ENCODE measurements at regions of chr13 and their contacts with region 1.

Region 1: DNA sequence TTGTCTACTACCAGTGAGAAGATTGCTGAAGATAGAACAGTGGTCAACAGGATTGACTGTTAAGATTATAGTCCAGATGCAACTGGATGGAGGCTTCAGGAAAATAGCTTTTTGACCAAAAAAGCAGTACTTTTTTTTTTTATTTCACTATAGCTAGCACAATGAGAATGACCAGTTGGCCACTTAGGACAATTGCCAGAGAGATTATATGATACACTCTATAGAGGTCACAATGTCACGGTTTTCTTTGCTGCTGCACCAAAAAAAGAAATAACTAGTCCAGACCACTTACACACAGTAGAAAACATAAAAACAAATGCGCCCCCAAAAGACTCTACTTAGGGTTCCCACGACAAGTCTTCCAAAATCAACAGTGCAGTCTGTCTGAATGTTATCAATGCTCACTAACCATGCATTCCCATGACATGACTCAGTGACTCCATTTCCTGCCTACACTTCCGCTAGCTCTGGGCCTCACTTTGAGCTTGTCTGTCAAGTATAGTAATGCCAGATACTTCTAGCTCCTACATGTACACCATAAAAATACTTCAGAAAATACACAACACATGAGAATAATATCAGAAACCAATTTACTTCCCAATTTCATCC is 209.1 kb upstream of the STARD13 start:
- DNase-seq: no peak
- H3K4me3 ChIP-seq: no peak overlapping the region
- H3K27ac ChIP-seq: peak overlapping the region; percentile 56 to 82
- H3K4me1 ChIP-seq: peaks cover 0 to 35% of the 10 kb centered on the region in 2 donors
- H3K27me3 ChIP-seq: no peaks in the 10 kb centered on the region
- CTCF ChIP-seq: no peak

Region 2: DNA sequence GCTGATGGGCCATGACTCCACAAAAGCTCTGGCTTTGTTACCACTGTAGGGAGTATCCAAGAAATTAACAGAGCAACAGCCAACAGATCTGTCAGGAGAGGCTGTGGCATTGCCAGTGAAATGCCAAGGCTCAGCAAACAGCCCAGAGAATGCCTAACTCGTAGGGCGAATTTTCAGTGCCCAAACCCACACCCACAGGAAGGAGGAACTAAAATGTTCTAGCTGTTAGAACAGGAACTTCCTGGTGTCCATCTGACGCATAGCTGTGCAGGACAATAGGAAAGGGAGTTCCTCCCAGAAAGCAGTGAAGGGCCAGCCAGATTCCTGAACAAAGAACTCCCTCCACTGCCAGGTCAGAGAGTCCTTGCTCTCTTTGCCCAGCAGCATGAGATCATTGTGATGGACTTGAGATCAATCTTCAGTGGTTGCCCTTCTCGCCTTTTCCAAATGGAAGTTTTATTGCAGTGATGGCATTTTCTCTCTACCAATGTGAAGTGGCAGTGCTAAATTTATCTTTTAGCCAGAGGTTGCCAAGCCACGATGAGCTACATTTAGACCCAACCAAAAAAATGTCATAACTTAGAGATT is 15.0 kb after region 1 on chr13:
- intact Hi-C with region 1: loop called (anchors 2 kb)
- DNase-seq: peak; percentile 21 to 86
- H3K4me3 ChIP-seq: peak overlapping the region; percentile 7 to 38
- H3K27ac ChIP-seq: peak overlapping the region; percentile 91 to 95
- H3K4me1 ChIP-seq: peaks cover 5 to 28% of the 10 kb centered on the region in 2 donors
- H3K27me3 ChIP-seq: no peaks in the 10 kb centered on the region
- CTCF ChIP-seq: no peak

Region 3: DNA sequence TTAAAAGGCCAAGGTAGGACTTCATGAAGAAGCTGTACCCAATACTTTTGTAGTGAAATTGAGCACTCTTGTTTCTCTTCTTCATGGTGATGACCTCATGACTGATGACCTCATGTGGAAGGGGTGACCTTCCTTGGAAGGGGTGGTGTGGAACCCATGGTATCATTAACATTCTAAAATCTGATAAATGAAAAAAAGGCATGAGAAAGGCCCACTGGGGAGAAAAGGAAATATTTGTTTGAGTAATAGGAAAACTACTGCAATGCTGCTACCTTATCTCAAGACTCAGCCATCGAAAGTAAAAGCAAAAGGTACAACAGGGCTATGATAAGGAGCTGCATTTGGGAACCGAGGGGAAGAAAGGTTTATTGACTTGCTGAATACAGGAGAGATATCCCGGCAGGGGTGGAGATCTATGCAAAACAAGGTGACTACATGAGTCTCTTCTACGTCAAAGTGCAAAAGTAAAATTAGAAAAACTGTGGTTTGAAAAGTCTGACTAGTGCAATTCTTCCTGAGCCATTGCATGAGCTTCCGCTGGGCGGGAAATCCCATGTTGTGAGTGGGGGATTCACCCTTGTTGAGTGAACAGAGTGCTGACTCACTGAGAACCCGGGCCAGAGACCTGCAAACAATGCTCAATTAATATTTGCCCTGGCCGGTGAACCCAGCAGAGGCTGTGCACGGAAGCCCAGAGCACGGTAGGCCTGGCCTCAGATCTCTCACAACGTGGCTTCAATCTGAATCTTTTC is 184.4 kb after region 1 on chr13:
- intact Hi-C with region 1: no loop called
- DNase-seq: peak; percentile 16 to 73
- H3K4me3 ChIP-seq: no peak overlapping the region
- H3K27ac ChIP-seq: no peak overlapping the region
- H3K4me1 ChIP-seq: peaks cover 0 to 3% of the 10 kb centered on the region in 2 donors
- H3K27me3 ChIP-seq: no peaks in the 10 kb centered on the region
- CTCF ChIP-seq: no peak